Transverse colon (tissue), 4 donors: ENCODE measurements at regions of chr18 and their contacts with region 1.

Region 1: DNA sequence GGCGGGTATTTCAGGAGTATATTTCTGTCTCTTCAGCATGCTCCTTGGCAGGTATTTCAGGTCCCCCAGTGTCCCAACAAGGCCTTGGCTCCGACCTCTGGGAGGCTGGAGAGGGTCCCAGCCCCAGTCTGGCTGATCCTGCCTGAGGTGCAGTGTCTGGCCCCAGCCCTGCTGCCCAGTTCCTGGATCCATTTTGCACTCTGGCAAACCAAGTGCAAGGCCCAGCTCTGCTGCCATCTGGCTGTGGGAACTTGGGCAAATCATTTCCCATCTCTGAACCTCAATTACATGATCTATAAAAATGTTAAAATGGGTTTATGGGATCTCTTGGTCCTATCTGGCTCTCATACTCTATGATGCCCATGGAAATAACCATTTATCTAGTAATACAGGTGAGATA is 63.6 kb downstream of the ZBTB7C start:
- DNase-seq: peak; percentile 48
- H3K4me3 ChIP-seq: no peak overlapping the region
- H3K27ac ChIP-seq: no peak overlapping the region
- H3K4me1 ChIP-seq: no peaks in the 10 kb centered on the region
- H3K27me3 ChIP-seq: no peaks in the 10 kb centered on the region
- CTCF ChIP-seq: peak; percentile 19 to 50 (median 36)
- EP300 ChIP-seq: no peak
- POLR2A ChIP-seq: no peak

Region 2: GRCh38 chr18:49238433-49239042 is 892.9 kb after region 1 on chr18:
- in situ Hi-C with region 1: no loop called
- intact Hi-C with region 1: loop called (anchors 5 kb)
- DNase-seq: no peak
- H3K4me3 ChIP-seq: no peak overlapping the region
- H3K27ac ChIP-seq: no peak overlapping the region
- H3K4me1 ChIP-seq: no peaks in the 10 kb centered on the region
- H3K27me3 ChIP-seq: no peaks in the 10 kb centered on the region
- CTCF ChIP-seq: peak; percentile 38 to 51 (median 41)
- EP300 ChIP-seq: no peak
- POLR2A ChIP-seq: no peak